CD4-positive, alpha-beta memory T cell (primary cell): ENCODE measurements at regions of chr11 and their contacts with region 1.

Region 1: DNA sequence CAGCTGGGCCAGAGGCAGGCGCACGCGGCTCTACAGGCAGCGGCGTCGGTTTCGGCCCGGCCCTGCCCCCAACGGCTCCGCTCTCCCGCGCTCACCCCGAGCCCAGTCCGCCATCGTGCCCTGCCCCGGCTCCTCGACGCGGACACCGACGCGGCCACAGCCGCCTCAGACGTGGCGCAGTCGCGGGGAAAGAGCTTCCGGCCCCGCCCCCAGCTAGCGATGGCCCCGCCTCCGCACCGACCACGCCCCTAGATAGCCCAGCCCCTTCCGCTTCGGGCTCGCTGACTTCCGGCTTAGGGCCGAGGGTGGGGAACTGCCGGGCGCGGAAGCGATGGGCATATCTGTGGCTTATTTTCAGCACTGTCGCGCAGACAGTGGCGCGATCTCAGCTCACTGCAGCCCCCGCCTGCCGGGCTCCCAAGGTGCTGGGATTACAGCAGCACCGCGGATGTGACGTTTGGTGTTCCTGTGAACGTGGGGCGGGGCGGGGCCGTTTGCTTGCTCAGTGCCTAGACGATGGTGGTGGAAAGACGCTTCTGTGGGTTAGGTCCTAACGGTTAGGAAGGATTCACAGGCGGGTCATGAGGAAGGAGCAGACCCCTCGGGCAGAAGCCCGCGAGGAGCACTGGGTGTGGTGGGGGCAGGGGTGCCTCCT is at the starts of genes BET1L and RIC8A:
- DNase-seq: peak; percentile 95 to 99 (median 98)
- H3K4me3 ChIP-seq: peak within 1 kb of the TSS; percentile 95 to 100
- H3K4me3 Mint-ChIP-seq: peak within 1 kb of the TSS; percentile 94 to 100 (median 99)
- H3K27ac ChIP-seq: peak within 1 kb of the TSS; percentile 98
- H3K27ac Mint-ChIP-seq: peak within 1 kb of the TSS; percentile 99 to 100 (median 99)
- H3K4me1 ChIP-seq: peaks cover 55% of the 10 kb centered on the region
- H3K4me1 Mint-ChIP-seq: peaks cover 22 to 73% (median 50%) of the 10 kb centered on the region in 4 donors
- H3K27me3 ChIP-seq: no peaks in the 10 kb centered on the region
- H3K27me3 Mint-ChIP-seq: no peaks in the 10 kb centered on the region
- total RNA-seq, gene BET1L: 122 to 129 TPM
- total RNA-seq, gene RIC8A: 96.7 to 111 TPM

Region 2: DNA sequence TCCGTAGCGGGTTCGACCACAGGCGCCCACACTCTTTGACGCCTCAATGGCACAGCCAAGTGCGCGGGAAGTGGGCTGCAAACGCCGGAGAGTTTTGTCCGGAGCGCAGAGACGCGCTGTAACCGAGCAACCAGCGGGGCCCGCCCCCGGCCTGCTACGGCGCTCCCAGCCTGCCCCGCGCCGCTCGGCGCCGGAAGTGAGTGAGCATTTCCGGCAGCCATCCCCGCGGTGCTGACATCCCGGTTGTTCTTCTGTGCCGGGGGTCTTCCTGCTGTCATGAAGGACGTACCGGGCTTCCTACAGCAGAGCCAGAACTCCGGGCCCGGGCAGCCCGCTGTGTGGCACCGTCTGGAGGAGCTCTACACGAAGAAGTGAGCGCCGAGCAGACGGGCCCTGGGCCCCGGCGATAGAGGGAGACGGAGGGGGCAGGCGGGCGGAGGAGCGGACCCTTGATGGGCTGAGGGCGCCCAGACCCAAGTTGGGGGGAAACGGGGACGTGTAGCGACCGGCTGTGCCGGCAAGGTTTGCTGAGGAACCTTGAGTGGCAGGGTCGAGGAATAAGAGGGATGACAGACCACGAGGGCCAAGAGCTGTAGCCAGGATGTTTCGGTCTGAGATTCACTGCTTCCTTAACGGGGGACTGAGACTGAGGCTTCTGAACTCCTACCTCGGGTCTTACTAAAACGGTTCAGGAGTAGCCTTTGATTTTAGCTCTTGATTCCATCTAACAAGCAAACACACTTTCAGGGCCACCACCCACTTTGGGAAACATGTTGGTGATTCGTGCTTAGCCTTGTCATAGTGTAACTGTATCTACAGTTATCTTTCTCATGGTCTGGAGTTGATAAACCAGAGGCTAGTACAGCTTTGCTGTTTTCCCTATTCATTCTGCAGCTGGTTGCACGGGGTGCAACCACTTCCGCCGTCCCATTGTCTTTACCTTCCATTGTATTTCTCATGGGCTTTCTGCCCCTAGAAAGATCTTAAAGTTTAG is 29.7 kb after region 1 on chr11 and contains the start of gene PSMD13:
- CTCF ChIA-PET with region 1: interaction called, 9 read pairs
- POLR2A ChIA-PET with region 1: interaction called, 144 read pairs
- intact Hi-C with region 1: loop called (anchors 1 kb)
- DNase-seq: peak; percentile 85 to 90 (median 88)
- H3K4me3 ChIP-seq: peak within 1 kb of the TSS; percentile 96 to 100
- H3K4me3 Mint-ChIP-seq: peak within 1 kb of the TSS; percentile 98 to 100 (median 99)
- H3K27ac ChIP-seq: peak within 1 kb of the TSS; percentile 100
- H3K27ac Mint-ChIP-seq: peak within 1 kb of the TSS; percentile 97 to 100 (median 100)
- H3K4me1 ChIP-seq: peaks cover 22% of the 10 kb centered on the region
- H3K4me1 Mint-ChIP-seq: peaks cover 31 to 64% (median 46%) of the 10 kb centered on the region in 4 donors
- H3K27me3 ChIP-seq: no peaks in the 10 kb centered on the region
- H3K27me3 Mint-ChIP-seq: no peaks in the 10 kb centered on the region
- total RNA-seq, gene PSMD13: 99.9 to 107 TPM

Region 3: DNA sequence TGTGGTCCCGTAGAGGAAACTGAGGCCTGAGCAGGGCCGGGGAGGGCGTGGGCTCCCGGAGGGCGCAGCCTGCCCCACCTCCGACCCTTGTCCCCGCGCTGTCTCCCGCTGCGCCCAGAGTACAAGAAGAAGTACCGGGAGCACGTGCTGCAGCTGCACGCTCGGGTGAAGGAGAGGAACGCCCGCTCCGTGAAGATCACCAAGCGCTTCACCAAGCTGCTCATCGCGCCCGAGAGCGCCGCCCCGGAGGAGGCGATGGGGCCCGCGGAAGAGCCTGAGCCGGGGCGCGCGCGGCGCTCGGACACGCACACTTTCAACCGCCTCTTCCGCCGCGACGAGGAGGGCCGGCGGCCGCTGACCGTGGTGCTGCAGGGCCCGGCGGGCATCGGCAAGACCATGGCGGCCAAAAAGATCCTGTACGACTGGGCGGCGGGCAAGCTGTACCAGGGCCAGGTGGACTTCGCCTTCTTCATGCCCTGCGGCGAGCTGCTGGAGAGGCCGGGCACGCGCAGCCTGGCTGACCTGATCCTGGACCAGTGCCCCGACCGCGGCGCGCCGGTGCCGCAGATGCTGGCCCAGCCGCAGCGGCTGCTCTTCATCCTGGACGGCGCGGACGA is 72.7 kb after region 1 on chr11:
- CTCF ChIA-PET with region 1: no interaction called
- POLR2A ChIA-PET with region 1: interaction called, 23 read pairs
- intact Hi-C with region 1: loop called (anchors 1 kb)
- DNase-seq: peak in 4 of 5 donors; percentile 55 to 61 (median 57)
- H3K4me3 ChIP-seq: peak overlapping the region in 1 of 2 donors; percentile 59
- H3K4me3 Mint-ChIP-seq: peak overlapping the region; percentile 84 to 91 (median 88)
- H3K27ac ChIP-seq: no peak overlapping the region
- H3K27ac Mint-ChIP-seq: peak overlapping the region in 4 of 7 donors; percentile 70 to 92 (median 84)
- H3K4me1 ChIP-seq: peaks cover 60% of the 10 kb centered on the region
- H3K4me1 Mint-ChIP-seq: peaks cover 30 to 61% (median 46%) of the 10 kb centered on the region in 4 donors
- H3K27me3 ChIP-seq: no peaks in the 10 kb centered on the region
- H3K27me3 Mint-ChIP-seq: no peaks in the 10 kb centered on the region

Region 4: DNA sequence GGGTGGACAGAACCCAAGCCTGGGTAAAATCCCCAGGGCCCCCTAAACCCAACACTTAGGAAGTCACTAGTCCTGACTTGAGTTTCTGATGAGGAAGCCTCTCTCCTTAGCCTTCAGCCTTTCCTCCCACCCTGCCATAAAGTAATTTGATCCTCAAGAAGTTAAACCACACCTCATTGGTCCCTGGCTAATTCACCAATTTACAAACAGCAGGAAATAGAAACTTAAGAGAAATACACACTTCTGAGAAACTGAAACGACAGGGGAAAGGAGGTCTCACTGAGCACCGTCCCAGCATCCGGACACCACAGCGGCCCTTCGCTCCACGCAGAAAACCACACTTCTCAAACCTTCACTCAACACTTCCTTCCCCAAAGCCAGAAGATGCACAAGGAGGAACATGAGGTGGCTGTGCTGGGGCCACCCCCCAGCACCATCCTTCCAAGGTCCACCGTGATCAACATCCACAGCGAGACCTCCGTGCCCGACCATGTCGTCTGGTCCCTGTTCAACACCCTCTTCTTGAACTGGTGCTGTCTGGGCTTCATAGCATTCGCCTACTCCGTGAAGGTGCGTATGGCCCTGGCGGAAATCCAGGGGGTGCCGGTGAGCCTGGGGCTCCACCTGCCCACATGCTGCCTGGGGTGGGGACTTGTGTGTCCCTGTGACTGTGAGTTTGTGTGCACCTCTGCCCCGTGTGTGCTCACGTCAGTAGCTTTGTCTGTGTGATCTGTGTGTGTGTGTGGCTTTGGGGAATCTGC is 106.6 kb after region 1 on chr11 and contains the start of gene IFITM1:
- CTCF ChIA-PET with region 1: no interaction called
- POLR2A ChIA-PET with region 1: interaction called, 30 read pairs
- intact Hi-C with region 1: loop called (anchors 2 kb)
- DNase-seq: peak; percentile 72 to 85 (median 79)
- H3K4me3 ChIP-seq: peak within 1 kb of the TSS; percentile 59 to 91
- H3K4me3 Mint-ChIP-seq: peak within 1 kb of the TSS; percentile 92 to 99 (median 98)
- H3K27ac ChIP-seq: peak within 1 kb of the TSS; percentile 76
- H3K27ac Mint-ChIP-seq: peak within 1 kb of the TSS; percentile 94 to 100 (median 98)
- H3K4me1 ChIP-seq: peaks cover 37% of the 10 kb centered on the region
- H3K4me1 Mint-ChIP-seq: peaks cover 29 to 56% (median 35%) of the 10 kb centered on the region in 4 donors
- H3K27me3 ChIP-seq: no peaks in the 10 kb centered on the region
- H3K27me3 Mint-ChIP-seq: no peaks in the 10 kb centered on the region
- total RNA-seq, gene IFITM1: 119 to 121 TPM

Region 5: DNA sequence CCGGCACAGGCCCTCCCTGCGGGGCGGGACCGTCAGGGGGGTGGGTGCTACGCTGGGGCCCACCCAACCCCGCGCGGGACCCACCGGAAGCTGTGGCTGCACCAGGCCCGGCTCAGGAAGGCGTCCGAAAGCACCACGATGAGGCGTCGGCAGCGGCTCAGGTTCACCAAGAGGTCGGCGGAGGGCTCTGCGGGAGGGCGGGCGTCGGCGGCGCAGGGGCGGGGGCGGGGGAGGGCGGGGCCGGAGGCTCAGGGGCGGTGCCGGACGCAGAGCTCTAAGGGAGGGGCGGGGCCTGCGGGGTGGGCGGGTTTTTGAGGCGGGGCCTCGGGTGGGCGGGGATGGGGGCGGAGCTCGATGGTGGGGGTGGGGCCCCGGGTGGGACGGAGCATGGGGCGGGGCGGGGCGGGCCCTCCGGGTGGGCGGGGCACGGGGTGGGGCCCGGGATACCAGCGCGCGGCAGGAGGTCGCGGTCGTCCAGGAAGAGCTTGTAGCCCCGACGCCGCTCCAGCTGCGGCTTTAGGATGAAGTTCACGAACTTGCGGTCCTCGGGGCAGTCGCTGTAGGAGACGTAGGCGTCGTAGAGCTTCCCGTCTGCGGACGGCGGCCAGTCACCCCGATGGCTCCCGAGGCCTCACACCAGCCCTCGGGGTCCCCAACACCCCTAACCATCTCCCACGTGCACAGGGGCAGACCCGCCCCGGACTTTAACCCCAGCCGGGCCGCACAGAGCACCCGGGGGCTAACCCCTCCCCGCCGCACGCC is 199.8 kb after region 1 on chr11:
- CTCF ChIA-PET with region 1: no interaction called
- POLR2A ChIA-PET with region 1: interaction called, 30 read pairs
- intact Hi-C with region 1: loop called (anchors 2 kb)
- DNase-seq: peak; percentile 93 to 97 (median 95)
- H3K4me3 ChIP-seq: peak overlapping the region in 1 of 2 donors; percentile 28
- H3K4me3 Mint-ChIP-seq: peak overlapping the region in 5 of 8 donors; percentile 28 to 62 (median 41)
- H3K27ac ChIP-seq: peak overlapping the region; percentile 59
- H3K27ac Mint-ChIP-seq: peak overlapping the region; percentile 22 to 92 (median 72)
- H3K4me1 ChIP-seq: peaks cover 21% of the 10 kb centered on the region
- H3K4me1 Mint-ChIP-seq: peaks cover 0 to 18% (median 9%) of the 10 kb centered on the region in 4 donors
- H3K27me3 ChIP-seq: no peaks in the 10 kb centered on the region
- H3K27me3 Mint-ChIP-seq: no peaks in the 10 kb centered on the region

Region 6: DNA sequence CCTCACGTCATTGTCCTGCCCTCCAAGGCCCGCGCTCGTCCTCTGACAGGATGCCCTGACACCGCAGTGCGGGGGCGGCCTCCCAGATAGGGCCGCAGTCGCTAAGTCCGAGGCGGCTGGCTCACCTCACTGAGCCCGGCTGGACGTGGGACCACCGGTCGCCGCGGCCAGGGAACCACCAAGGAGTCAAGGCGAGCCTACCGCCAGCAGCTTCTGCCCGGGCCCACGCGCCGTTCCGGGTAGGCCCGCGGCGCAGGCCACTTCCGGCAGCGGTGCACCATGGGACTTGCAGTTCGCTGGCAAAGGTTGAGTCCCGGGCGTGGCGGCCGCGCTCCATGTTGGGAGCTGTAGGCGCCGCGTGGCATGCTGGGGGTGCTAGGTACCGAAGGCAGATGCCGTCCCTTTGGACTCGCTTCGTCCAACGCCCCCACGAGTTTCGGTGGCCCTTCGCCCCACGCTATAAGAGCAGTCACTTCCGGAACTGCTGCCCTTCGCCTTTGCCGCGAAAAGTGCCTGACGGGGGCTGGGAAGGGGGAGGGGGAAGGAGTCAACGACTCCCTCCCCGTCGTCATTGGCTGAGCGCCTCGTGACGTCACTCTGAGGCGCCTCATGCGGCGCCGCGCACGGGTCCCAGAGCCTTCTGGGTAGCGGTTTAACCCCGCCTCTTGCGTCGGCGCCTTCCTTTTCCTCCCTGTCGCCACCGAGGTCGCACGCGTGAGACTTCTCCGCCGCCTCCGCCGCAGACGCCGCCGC is 602.1 kb after region 1 on chr11 and contains the start of gene RPLP2:
- CTCF ChIA-PET with region 1: no interaction called
- POLR2A ChIA-PET with region 1: interaction called, 4 read pairs
- intact Hi-C with region 1: loop called (anchors 1 kb)
- DNase-seq: peak; percentile 97 to 99 (median 97)
- H3K4me3 ChIP-seq: peak within 1 kb of the TSS; percentile 53 to 100
- H3K4me3 Mint-ChIP-seq: peak within 1 kb of the TSS; percentile 91 to 98 (median 94)
- H3K27ac ChIP-seq: peak within 1 kb of the TSS; percentile 96
- H3K27ac Mint-ChIP-seq: peak within 1 kb of the TSS; percentile 98 to 100 (median 99)
- H3K4me1 ChIP-seq: peaks cover 35% of the 10 kb centered on the region
- H3K4me1 Mint-ChIP-seq: peaks cover 8 to 48% (median 29%) of the 10 kb centered on the region in 4 donors
- H3K27me3 ChIP-seq: no peaks in the 10 kb centered on the region
- H3K27me3 Mint-ChIP-seq: no peaks in the 10 kb centered on the region
- total RNA-seq, gene RPLP2: 4,870 to 5,155 TPM